Activated naive CD4-positive, alpha-beta T cell treated with anti-CD3 and anti-CD28 coated beads for 36 hours (primary cell): ENCODE measurements at regions of chr3 and their contacts with region 1.

Region 1: GRCh38 chr3:178155521-178155920 is 380.7 kb upstream of the KCNMB2 start:
- DNase-seq: peak; percentile 14
- H3K4me3 Mint-ChIP-seq: no peak overlapping the region
- H3K27ac Mint-ChIP-seq: no peak overlapping the region
- H3K4me1 Mint-ChIP-seq: no peaks in the 10 kb centered on the region
- H3K27me3 Mint-ChIP-seq: no peaks in the 10 kb centered on the region

Region 2: DNA sequence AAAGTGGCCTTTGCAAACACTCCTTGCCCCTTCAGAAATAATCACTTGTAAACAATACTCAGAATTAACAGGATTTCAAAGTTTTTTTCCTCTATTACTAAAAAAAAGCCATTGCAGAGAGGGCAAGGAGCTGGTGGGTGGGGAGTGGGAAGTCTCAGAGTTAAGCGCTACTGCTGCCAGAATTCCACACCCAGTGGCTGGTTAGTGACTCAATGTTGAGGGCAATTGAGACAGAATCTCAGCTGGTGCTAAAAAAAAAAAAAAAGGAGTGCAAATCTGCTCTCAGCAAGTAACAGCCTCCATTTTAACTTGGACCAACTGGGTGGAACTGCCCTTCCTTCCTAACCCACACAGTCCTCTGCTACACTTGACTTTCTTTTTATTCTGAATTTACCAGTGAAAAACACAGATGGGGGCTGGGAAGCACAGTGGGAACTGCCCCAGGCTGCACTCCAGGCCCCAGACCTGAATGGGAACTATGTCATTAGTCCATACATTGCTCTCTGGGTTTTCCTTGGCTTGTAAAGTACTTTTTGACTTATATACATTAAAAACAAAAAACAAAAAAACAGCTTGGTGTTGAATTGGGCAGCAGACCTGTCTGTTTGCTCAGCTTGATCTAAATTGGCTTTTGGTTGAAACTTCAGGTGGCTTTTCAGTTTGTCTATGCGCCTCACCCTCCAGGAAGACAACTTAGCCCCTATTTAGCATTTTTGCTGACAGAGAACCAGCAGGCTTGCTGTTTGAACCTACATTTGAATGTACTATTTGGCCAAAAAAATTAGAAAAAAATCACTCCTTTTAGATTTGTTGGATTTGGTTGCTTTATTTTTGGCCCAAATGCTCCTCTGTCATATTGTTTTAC is 600.4 kb before region 1 on chr3:
- CTCF ChIA-PET with region 1: no interaction called
- intact Hi-C with region 1: loop called (anchors 10 kb)
- DNase-seq: no peak
- H3K4me3 Mint-ChIP-seq: no peak overlapping the region
- H3K27ac Mint-ChIP-seq: no peak overlapping the region
- H3K4me1 Mint-ChIP-seq: peaks cover 29% of the 10 kb centered on the region
- H3K27me3 Mint-ChIP-seq: no peaks in the 10 kb centered on the region

Region 3: DNA sequence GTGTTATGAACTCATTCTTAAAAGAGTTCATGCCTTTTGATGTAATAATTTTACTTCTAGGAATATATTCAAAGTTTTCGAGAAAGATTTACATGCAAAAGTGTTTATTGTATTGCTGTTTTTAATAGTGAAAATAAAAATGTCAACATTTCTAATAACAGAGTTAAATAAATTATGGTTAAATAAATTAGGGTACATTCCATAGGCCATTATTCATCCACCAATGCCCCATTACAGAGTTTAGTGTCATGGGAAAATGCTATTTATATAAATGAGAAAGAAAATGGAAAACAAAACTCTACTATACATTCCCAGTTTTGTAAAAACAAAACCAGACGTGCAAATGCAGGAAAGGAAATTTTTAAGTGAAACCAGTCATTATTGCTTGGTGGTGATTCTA is 420.1 kb before region 1 on chr3:
- CTCF ChIA-PET with region 1: no interaction called
- intact Hi-C with region 1: loop called (anchors 5 kb)
- DNase-seq: no peak
- H3K4me3 Mint-ChIP-seq: no peak overlapping the region
- H3K27ac Mint-ChIP-seq: no peak overlapping the region
- H3K4me1 Mint-ChIP-seq: peaks cover 11% of the 10 kb centered on the region
- H3K27me3 Mint-ChIP-seq: no peaks in the 10 kb centered on the region